CD4-positive, alpha-beta T cell (primary cell): ENCODE measurements at regions of chr10 and their contacts with region 1.

Region 1: GRCh38 chr10:97210543-97210961 is 24.8 kb upstream of the SLIT1 start:
- DNase-seq: peak; percentile 46 to 84 (median 62)
- ATAC-seq: peak; percentile 51
- H3K4me3 ChIP-seq: no peak overlapping the region
- H3K4me3 Mint-ChIP-seq: no peak overlapping the region
- H3K27ac ChIP-seq: no peak overlapping the region
- H3K27ac Mint-ChIP-seq: no peak overlapping the region
- H3K4me1 ChIP-seq: no peaks in the 10 kb centered on the region
- H3K4me1 Mint-ChIP-seq: no peaks in the 10 kb centered on the region
- H3K27me3 ChIP-seq: no peaks in the 10 kb centered on the region
- H3K27me3 Mint-ChIP-seq: no peaks in the 10 kb centered on the region
- CTCF ChIP-seq: peak; percentile 98

Region 2: GRCh38 chr10:96374985-96375830 is 835.3 kb before region 1 on chr10:
- CTCF ChIA-PET with region 1: no interaction called
- POLR2A ChIA-PET with region 1: no interaction called
- intact Hi-C with region 1: loop called in 1 of 2 experiments (anchors 5 kb)
- DNase-seq: peak; percentile 46 to 82 (median 61)
- ATAC-seq: peak; percentile 94
- H3K4me3 ChIP-seq: peak overlapping the region; percentile 59
- H3K4me3 Mint-ChIP-seq: peak overlapping the region; percentile 76
- H3K27ac ChIP-seq: no peak overlapping the region
- H3K27ac Mint-ChIP-seq: no peak overlapping the region
- H3K4me1 ChIP-seq: peaks cover 13% of the 10 kb centered on the region
- H3K4me1 Mint-ChIP-seq: peaks cover 4% of the 10 kb centered on the region
- H3K27me3 ChIP-seq: no peaks in the 10 kb centered on the region
- H3K27me3 Mint-ChIP-seq: peaks cover 11% of the 10 kb centered on the region
- CTCF ChIP-seq: peak; percentile 98

Region 3: DNA sequence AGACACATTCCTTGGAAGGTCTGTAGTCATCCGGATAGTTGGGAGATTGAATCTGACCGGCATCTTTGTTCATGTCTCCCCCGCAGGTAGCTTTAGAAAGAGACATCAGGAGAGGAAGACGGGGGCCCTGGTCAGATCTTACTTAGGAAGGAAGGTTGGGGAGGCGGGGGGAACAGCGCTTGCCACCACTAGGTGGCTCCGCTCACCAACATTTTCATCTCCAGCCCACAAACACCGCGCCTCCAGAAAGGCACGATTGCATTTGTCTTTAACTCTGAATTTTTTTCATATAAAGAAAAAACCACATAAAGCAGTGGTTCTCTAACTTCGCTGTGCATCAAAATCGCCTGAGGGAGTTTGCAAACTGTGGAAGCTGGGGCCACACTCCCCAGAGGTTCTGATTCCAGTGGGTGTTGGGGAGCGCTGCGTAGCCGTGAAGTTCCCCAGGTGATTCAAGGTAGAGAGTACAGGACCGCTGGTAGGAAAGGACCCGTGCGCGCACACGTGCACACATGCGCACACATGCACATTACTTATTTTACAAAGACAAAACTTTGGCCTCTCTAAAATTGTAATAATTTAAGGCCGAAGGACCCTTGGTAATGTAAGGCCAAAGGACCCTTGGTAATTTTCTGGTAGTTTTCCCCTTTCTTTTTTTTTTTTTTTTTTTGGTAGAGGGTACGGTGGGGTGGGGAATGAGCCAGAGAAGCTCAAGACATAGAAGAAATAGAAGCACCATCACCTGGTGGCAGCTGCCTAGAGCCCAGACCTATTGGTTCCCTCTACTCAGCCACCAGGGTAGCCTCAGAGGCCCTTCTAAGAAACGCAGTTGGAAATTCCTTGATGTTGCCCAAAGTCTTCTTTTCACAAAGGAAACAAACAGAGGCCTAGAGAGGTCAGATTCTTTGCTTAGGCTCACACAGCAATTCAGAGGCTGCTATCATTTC is 814.3 kb before region 1 on chr10:
- CTCF ChIA-PET with region 1: interaction called, 4 read pairs
- POLR2A ChIA-PET with region 1: no interaction called
- intact Hi-C with region 1: loop called in 1 of 2 experiments (anchors 5 kb)
- DNase-seq: peak; percentile 39 to 79 (median 46)
- ATAC-seq: peak; percentile 89
- H3K4me3 ChIP-seq: no peak overlapping the region
- H3K4me3 Mint-ChIP-seq: peak overlapping the region; percentile 60
- H3K27ac ChIP-seq: no peak overlapping the region
- H3K27ac Mint-ChIP-seq: no peak overlapping the region
- H3K4me1 ChIP-seq: peaks cover 6% of the 10 kb centered on the region
- H3K4me1 Mint-ChIP-seq: peaks cover 6% of the 10 kb centered on the region
- H3K27me3 ChIP-seq: peaks cover 13 to 14% of the 10 kb centered on the region in 2 experiments
- H3K27me3 Mint-ChIP-seq: peaks cover 31% of the 10 kb centered on the region
- CTCF ChIP-seq: peak; percentile 96

Region 4: GRCh38 chr10:96765406-96766240 is 444.9 kb before region 1 on chr10:
- CTCF ChIA-PET with region 1: no interaction called
- POLR2A ChIA-PET with region 1: no interaction called
- intact Hi-C with region 1: loop called in 1 of 2 experiments (anchors 2 kb)
- DNase-seq: peak; percentile 61 to 83 (median 70)
- ATAC-seq: peak; percentile 94
- H3K4me3 ChIP-seq: no peak overlapping the region
- H3K4me3 Mint-ChIP-seq: no peak overlapping the region
- H3K27ac ChIP-seq: no peak overlapping the region
- H3K27ac Mint-ChIP-seq: no peak overlapping the region
- H3K4me1 ChIP-seq: peaks cover 3% of the 10 kb centered on the region
- H3K4me1 Mint-ChIP-seq: no peaks in the 10 kb centered on the region
- H3K27me3 ChIP-seq: no peaks in the 10 kb centered on the region
- H3K27me3 Mint-ChIP-seq: peaks cover 4% of the 10 kb centered on the region
- CTCF ChIP-seq: peak; percentile 95

Region 5: GRCh38 chr10:97072851-97073665 is 137.5 kb before region 1 on chr10:
- CTCF ChIA-PET with region 1: interaction called, 53 read pairs
- POLR2A ChIA-PET with region 1: interaction called, 10 read pairs
- intact Hi-C with region 1: loop called (anchors 1 kb)
- DNase-seq: peak; percentile 57 to 82 (median 76)
- ATAC-seq: peak; percentile 82
- H3K4me3 ChIP-seq: no peak overlapping the region
- H3K4me3 Mint-ChIP-seq: no peak overlapping the region
- H3K27ac ChIP-seq: no peak overlapping the region
- H3K27ac Mint-ChIP-seq: no peak overlapping the region
- H3K4me1 ChIP-seq: peaks cover 7% of the 10 kb centered on the region
- H3K4me1 Mint-ChIP-seq: peaks cover 11% of the 10 kb centered on the region
- H3K27me3 ChIP-seq: peaks cover 0 to 14% of the 10 kb centered on the region in 2 experiments
- H3K27me3 Mint-ChIP-seq: peaks cover 39% of the 10 kb centered on the region
- CTCF ChIP-seq: peak; percentile 83

Region 6: DNA sequence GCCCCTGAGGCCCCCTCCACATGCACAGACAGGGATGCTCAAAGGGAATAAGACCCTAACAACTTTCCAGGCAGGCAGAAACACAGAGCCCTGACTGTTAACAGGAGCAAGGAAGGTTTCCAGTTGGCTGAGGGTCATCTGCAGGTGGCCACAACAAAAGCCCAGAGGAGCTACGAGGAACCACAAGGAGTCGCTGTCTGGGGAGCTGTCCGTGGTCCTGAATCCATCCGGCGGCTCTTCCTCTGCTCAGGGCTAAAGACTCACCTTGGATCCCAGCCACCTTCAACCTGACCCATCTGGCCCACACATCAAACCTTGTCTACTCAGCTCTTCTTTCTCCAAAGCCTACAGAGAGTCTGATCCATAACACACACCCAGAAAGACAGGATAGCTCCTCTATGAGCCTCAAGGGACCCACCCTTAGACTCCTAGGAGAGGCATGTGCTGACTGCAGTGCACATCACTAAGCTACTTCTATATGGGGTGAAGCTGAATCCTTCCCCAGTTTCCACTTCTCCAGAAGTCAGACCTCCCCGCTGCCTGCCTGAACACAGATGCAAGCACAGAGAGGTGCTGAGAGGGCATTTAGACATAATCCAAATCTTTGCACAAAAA is 128.8 kb before region 1 on chr10:
- CTCF ChIA-PET with region 1: interaction called, 10 read pairs
- POLR2A ChIA-PET with region 1: no interaction called
- intact Hi-C with region 1: no loop called
- DNase-seq: peak; percentile 23 to 74 (median 40)
- ATAC-seq: no peak
- H3K4me3 ChIP-seq: no peak overlapping the region
- H3K4me3 Mint-ChIP-seq: no peak overlapping the region
- H3K27ac ChIP-seq: no peak overlapping the region
- H3K27ac Mint-ChIP-seq: no peak overlapping the region
- H3K4me1 ChIP-seq: no peaks in the 10 kb centered on the region
- H3K4me1 Mint-ChIP-seq: no peaks in the 10 kb centered on the region
- H3K27me3 ChIP-seq: peaks cover 14 to 21% of the 10 kb centered on the region in 2 experiments
- H3K27me3 Mint-ChIP-seq: peaks cover 40% of the 10 kb centered on the region
- CTCF ChIP-seq: peak; percentile 24

Region 7: GRCh38 chr10:97196223-97197029 is 14.1 kb before region 1 on chr10:
- CTCF ChIA-PET with region 1: interaction called, 32 read pairs
- POLR2A ChIA-PET with region 1: interaction called, 3 read pairs
- intact Hi-C with region 1: no loop called
- DNase-seq: peak; percentile 36 to 81 (median 58)
- ATAC-seq: peak; percentile 86
- H3K4me3 ChIP-seq: peak overlapping the region; percentile 67
- H3K4me3 Mint-ChIP-seq: peak overlapping the region; percentile 90
- H3K27ac ChIP-seq: no peak overlapping the region
- H3K27ac Mint-ChIP-seq: peak overlapping the region; percentile 13
- H3K4me1 ChIP-seq: peaks cover 11% of the 10 kb centered on the region
- H3K4me1 Mint-ChIP-seq: peaks cover 8% of the 10 kb centered on the region
- H3K27me3 ChIP-seq: peaks cover 6 to 14% of the 10 kb centered on the region in 2 experiments
- H3K27me3 Mint-ChIP-seq: peaks cover 22% of the 10 kb centered on the region
- CTCF ChIP-seq: peak; percentile 89

Region 8: GRCh38 chr10:97279121-97279815 is 68.7 kb after region 1 on chr10:
- CTCF ChIA-PET with region 1: no interaction called
- POLR2A ChIA-PET with region 1: no interaction called
- intact Hi-C with region 1: no loop called
- DNase-seq: peak in 2 of 14 experiments; percentile 32 to 35
- ATAC-seq: no peak
- H3K4me3 ChIP-seq: no peak overlapping the region
- H3K4me3 Mint-ChIP-seq: no peak overlapping the region
- H3K27ac ChIP-seq: no peak overlapping the region
- H3K27ac Mint-ChIP-seq: peak overlapping the region; percentile 25
- H3K4me1 ChIP-seq: no peaks in the 10 kb centered on the region
- H3K4me1 Mint-ChIP-seq: peaks cover 6% of the 10 kb centered on the region
- H3K27me3 ChIP-seq: no peaks in the 10 kb centered on the region
- H3K27me3 Mint-ChIP-seq: no peaks in the 10 kb centered on the region
- CTCF ChIP-seq: no peak